Tibial artery (tissue), 4 donors: ENCODE measurements at regions of chr2 and their contacts with region 1.

Region 1: GRCh38 chr2:55617175-55618024 is at the start of gene PPP4R3B:
- DNase-seq: peak; percentile 99 to 100
- H3K4me3 ChIP-seq: peak within 1 kb of the TSS; percentile 73 to 98
- H3K27ac ChIP-seq: peak within 1 kb of the TSS; percentile 98 to 100
- H3K4me1 ChIP-seq: peaks cover 0 to 53% (median 27%) of the 10 kb centered on the region in 4 donors
- H3K27me3 ChIP-seq: no peaks in the 10 kb centered on the region
- CTCF ChIP-seq: peak; percentile 61 to 82

Region 2: DNA sequence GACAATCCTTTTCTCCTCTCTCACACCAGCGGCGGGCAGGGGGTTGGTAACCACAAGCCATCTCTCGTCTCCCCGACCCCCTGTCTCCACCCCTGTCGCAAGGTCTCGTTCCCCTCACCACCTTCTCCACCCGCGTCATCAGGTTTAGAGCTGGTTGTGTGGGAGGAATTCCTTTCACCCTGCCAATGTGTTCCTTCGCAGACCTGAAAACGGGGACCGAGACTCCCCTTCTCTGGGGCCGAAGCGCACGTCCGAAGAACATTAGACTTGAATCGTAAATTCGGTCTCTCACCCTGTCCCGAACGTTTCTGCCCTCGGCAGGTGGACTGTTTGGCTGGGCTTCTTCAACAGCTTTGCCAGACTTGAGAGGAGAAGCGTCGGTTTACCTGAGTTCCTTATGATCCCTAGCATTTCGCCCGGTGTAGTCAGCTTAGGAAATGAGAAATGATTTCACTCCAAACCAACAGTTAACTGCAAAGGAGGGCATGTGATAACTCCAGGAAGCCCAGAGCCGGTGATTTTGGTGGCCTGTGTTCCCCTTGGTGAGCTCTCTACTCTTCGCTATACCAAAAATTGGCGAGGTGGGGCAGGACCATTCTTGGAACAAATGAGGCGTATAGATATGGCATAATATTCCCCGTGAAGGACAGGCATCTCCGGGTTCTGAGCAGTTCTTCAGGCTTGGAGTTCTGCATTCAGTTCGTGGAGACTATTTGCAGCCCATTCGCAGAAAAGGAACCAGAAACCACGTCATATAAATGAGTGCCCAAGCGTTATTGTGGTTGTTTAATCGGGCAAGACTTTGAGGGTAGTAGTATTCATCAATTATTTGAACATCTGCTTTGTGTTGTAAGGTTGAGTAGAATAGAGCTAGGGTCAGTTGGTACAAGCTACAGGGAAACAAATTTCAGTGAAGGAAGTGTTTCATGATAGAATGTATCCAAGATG is 97.2 kb before region 1 on chr2:
- intact Hi-C with region 1: loop called (anchors 10 kb)
- DNase-seq: peak in 1 of 2 donors; percentile 28
- H3K4me3 ChIP-seq: peak overlapping the region; percentile 67 to 79
- H3K27ac ChIP-seq: peak overlapping the region; percentile 89
- H3K4me1 ChIP-seq: peaks cover 0 to 13% (median 0%) of the 10 kb centered on the region in 4 donors
- H3K27me3 ChIP-seq: no peaks in the 10 kb centered on the region
- CTCF ChIP-seq: no peak